CD4-positive, alpha-beta memory T cell (primary cell): ENCODE measurements at regions of chr16 and their contacts with region 1.

Region 1: GRCh38 chr16:527006-527753 is at the start of gene CAPN15:
- DNase-seq: peak; percentile 82 to 92 (median 89)
- H3K4me3 ChIP-seq: peak within 1 kb of the TSS; percentile 50 to 81
- H3K4me3 Mint-ChIP-seq: peak within 1 kb of the TSS; percentile 90 to 95 (median 92)
- H3K27ac ChIP-seq: peak within 1 kb of the TSS; percentile 89
- H3K27ac Mint-ChIP-seq: peak within 1 kb of the TSS; percentile 86 to 95 (median 93)
- H3K4me1 ChIP-seq: peaks cover 43% of the 10 kb centered on the region
- H3K4me1 Mint-ChIP-seq: peaks cover 16 to 44% (median 29%) of the 10 kb centered on the region in 4 donors
- H3K27me3 ChIP-seq: no peaks in the 10 kb centered on the region
- H3K27me3 Mint-ChIP-seq: no peaks in the 10 kb centered on the region
- total RNA-seq, gene CAPN15: 74.0 to 77.4 TPM

Region 2: DNA sequence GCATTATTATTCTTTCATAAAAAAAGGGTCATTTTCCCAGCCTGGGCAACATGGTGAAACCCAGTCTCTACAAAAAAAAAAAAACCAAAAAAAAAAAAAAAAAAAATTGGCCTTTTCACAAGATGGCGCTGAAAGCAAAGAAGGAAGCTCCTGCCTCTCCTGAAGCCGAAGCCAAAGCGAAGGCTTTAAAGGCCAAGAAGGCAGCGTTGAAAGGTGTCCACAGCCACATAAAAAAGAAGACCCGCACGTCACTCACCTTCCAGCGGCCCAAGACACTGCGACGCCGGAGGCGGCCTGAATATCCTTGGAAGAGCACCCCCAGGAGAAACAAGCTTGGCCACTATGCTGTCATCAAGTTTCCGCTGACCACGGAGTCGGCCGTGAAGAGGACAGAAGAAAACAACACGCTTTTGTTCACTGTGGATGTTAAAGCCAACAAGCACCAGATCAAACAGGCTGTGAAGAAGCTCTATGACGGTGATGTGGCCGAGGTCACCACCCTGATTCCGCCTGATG is 140.5 kb before region 1 on chr16:
- CTCF ChIA-PET with region 1: no interaction called
- POLR2A ChIA-PET with region 1: no interaction called
- intact Hi-C with region 1: no loop called
- DNase-seq: no peak
- H3K4me3 ChIP-seq: no peak overlapping the region
- H3K4me3 Mint-ChIP-seq: no peak overlapping the region
- H3K27ac ChIP-seq: no peak overlapping the region
- H3K27ac Mint-ChIP-seq: peak overlapping the region in 2 of 7 donors; percentile 21 to 57
- H3K4me1 ChIP-seq: peaks cover 13% of the 10 kb centered on the region
- H3K4me1 Mint-ChIP-seq: peaks cover 11 to 17% (median 14%) of the 10 kb centered on the region in 4 donors
- H3K27me3 ChIP-seq: no peaks in the 10 kb centered on the region
- H3K27me3 Mint-ChIP-seq: no peaks in the 10 kb centered on the region

Region 3: GRCh38 chr16:401468-402348 is 125.5 kb before region 1 on chr16 and contains the start of gene DECR2:
- CTCF ChIA-PET with region 1: no interaction called
- POLR2A ChIA-PET with region 1: interaction called, 4 read pairs
- intact Hi-C with region 1: loop called (anchors 1 kb)
- DNase-seq: peak; percentile 92 to 96 (median 94)
- H3K4me3 ChIP-seq: peak within 1 kb of the TSS; percentile 61 to 68
- H3K4me3 Mint-ChIP-seq: peak within 1 kb of the TSS; percentile 88 to 94 (median 89)
- H3K27ac ChIP-seq: peak within 1 kb of the TSS; percentile 79
- H3K27ac Mint-ChIP-seq: peak within 1 kb of the TSS; percentile 88 to 96 (median 95)
- H3K4me1 ChIP-seq: peaks cover 13% of the 10 kb centered on the region
- H3K4me1 Mint-ChIP-seq: peaks cover 6 to 25% (median 11%) of the 10 kb centered on the region in 4 donors
- H3K27me3 ChIP-seq: no peaks in the 10 kb centered on the region
- H3K27me3 Mint-ChIP-seq: no peaks in the 10 kb centered on the region
- total RNA-seq, gene DECR2: 5.1 to 7.3 TPM

Region 4: GRCh38 chr16:425082-425718 is 102.0 kb before region 1 on chr16 and contains the start of gene RAB11FIP3:
- CTCF ChIA-PET with region 1: no interaction called
- POLR2A ChIA-PET with region 1: interaction called, 8 read pairs
- intact Hi-C with region 1: loop called (anchors 1 kb)
- DNase-seq: peak; percentile 83 to 89 (median 86)
- H3K4me3 ChIP-seq: peak within 1 kb of the TSS; percentile 65 to 83
- H3K4me3 Mint-ChIP-seq: peak within 1 kb of the TSS; percentile 86 to 94 (median 90)
- H3K27ac ChIP-seq: peak within 1 kb of the TSS; percentile 80
- H3K27ac Mint-ChIP-seq: peak within 1 kb of the TSS; percentile 87 to 98 (median 93)
- H3K4me1 ChIP-seq: peaks cover 35% of the 10 kb centered on the region
- H3K4me1 Mint-ChIP-seq: peaks cover 20 to 41% (median 31%) of the 10 kb centered on the region in 4 donors
- H3K27me3 ChIP-seq: no peaks in the 10 kb centered on the region
- H3K27me3 Mint-ChIP-seq: no peaks in the 10 kb centered on the region
- total RNA-seq, gene RAB11FIP3: 41.8 to 42.6 TPM

Region 5: DNA sequence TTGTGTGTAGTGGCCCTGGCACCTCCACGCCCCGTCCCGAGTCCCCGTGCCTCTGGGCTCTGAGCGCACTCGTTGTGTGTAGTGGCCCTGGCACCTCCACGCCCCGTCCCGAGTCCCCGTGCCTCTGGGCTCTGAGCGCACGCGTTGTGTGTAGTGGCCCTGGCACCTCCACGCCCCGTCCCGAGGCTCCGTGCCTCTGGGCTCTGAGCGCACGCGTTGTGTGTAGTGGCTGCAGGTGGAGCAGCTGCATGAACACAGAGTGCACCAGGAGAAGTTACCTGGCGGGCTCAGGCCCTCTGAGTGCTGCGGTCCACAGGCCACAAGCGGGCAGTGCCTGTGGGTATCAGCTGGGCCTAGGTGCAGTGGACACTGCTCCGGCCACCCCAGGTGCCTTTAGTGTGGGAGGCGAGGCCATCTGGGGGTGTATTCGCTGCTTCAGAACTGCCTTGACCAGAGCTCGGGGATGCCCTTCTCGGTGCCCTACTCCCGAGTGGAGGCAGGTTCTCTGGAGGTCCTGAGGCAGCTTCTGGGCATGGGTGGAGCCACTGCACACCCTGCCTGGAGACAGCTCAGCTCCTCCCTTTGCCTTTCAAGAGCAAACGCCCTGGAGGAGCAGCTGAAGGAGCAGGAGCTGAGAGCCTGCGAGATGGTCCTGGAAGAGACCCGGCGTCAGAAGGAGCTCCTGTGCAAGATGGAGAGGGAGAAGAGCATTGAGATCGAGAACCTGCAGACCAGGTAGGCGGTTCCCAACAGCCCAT is 16.9 kb before region 1 on chr16:
- CTCF ChIA-PET with region 1: no interaction called
- POLR2A ChIA-PET with region 1: no interaction called
- intact Hi-C with region 1: no loop called
- DNase-seq: no peak
- H3K4me3 ChIP-seq: no peak overlapping the region
- H3K4me3 Mint-ChIP-seq: no peak overlapping the region
- H3K27ac ChIP-seq: no peak overlapping the region
- H3K27ac Mint-ChIP-seq: no peak overlapping the region
- H3K4me1 ChIP-seq: no peaks in the 10 kb centered on the region
- H3K4me1 Mint-ChIP-seq: no peaks in the 10 kb centered on the region
- H3K27me3 ChIP-seq: no peaks in the 10 kb centered on the region
- H3K27me3 Mint-ChIP-seq: no peaks in the 10 kb centered on the region

Region 6: GRCh38 chr16:569445-570254 is 42.5 kb after region 1 on chr16 and contains the start of gene PIGQ:
- CTCF ChIA-PET with region 1: no interaction called
- POLR2A ChIA-PET with region 1: interaction called, 10 read pairs
- intact Hi-C with region 1: loop called (anchors 1 kb)
- DNase-seq: peak; percentile 65 to 71 (median 67)
- H3K4me3 ChIP-seq: peak within 1 kb of the TSS; percentile 52 to 64
- H3K4me3 Mint-ChIP-seq: peak within 1 kb of the TSS; percentile 84 to 92 (median 87)
- H3K27ac ChIP-seq: peak within 1 kb of the TSS; percentile 76
- H3K27ac Mint-ChIP-seq: peak within 1 kb of the TSS; percentile 88 to 96 (median 93)
- H3K4me1 ChIP-seq: peaks cover 37% of the 10 kb centered on the region
- H3K4me1 Mint-ChIP-seq: peaks cover 25 to 39% (median 32%) of the 10 kb centered on the region in 4 donors
- H3K27me3 ChIP-seq: no peaks in the 10 kb centered on the region
- H3K27me3 Mint-ChIP-seq: no peaks in the 10 kb centered on the region
- total RNA-seq, gene PIGQ: 61.4 to 63.3 TPM

Region 7: GRCh38 chr16:636206-637080 is 109.3 kb after region 1 on chr16 and contains the start of gene METTL26:
- CTCF ChIA-PET with region 1: no interaction called
- POLR2A ChIA-PET with region 1: interaction called, 16 read pairs
- intact Hi-C with region 1: no loop called
- DNase-seq: peak; percentile 92 to 95 (median 93)
- H3K4me3 ChIP-seq: peak within 1 kb of the TSS; percentile 81 to 86
- H3K4me3 Mint-ChIP-seq: peak within 1 kb of the TSS; percentile 95 to 100 (median 98)
- H3K27ac ChIP-seq: peak within 1 kb of the TSS; percentile 76
- H3K27ac Mint-ChIP-seq: peak within 1 kb of the TSS; percentile 94 to 100 (median 99)
- H3K4me1 ChIP-seq: peaks cover 21% of the 10 kb centered on the region
- H3K4me1 Mint-ChIP-seq: peaks cover 0 to 10% (median 5%) of the 10 kb centered on the region in 4 donors
- H3K27me3 ChIP-seq: no peaks in the 10 kb centered on the region
- H3K27me3 Mint-ChIP-seq: peaks cover 0 to 3% of the 10 kb centered on the region in 2 donors
- total RNA-seq, gene METTL26: 68.4 to 74.1 TPM